ENCODE measurements at regions of chr15 and their contacts with region 1.

Region 1: GRCh38 chr15:64893481-64894394 is 18.0 kb upstream of the ANKDD1A start:
- DNase-seq: peak; percentile 96
- H3K4me3 ChIP-seq: peak overlapping the region; percentile 57
- H3K27ac ChIP-seq: peak overlapping the region; percentile 94
- H3K4me1 ChIP-seq: peaks cover 62% of the 10 kb centered on the region
- H3K27me3 ChIP-seq: no peaks in the 10 kb centered on the region
- CTCF ChIP-seq: no peak

Region 2: DNA sequence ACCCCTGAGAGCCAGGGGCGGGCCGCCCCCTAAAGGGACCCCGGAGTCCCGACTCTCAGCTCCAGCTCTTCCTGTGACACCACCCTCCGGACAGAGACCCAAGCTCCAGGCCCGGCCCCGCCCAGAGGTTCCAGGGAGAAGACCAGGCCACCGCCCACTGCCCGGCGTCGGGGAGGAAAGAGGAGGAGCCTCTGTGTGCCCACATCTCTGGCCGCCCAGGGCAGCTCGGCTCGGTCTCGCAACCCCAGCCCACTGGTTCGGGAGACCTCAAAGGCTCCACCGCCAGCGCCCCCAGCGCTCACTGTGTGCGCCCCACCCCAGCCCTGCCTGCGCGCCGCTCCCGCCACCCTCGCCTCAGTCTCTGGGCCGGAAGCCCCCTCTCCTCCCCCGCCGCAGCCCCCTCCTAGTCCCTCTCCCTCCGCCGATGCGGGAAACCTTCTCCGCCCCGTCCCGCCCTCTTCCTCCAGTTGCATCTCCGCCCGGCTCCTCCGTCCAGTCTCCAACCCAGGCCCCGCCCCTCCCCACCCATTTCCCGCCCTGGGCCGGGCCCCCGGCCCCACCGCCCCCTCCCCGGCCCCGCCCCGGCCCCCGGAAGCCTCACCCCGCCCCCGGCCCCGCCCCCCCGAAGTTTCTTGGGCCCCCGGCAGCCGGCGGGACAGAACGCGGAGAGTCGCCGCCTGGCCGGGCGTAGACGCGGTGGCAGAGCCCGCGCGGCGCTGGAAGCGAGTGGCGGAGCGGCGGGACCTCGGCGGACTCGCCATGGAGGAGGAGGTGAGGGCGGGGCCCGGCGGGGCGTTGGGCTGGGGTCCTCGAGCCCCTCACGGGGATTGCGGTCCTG is 52.3 kb before region 1 on chr15 and contains the start of gene PLEKHO2:
- intact Hi-C with region 1: loop called (anchors 10 kb)
- DNase-seq: peak; percentile 97
- H3K4me3 ChIP-seq: peak within 1 kb of the TSS; percentile 99
- H3K27ac ChIP-seq: peak within 1 kb of the TSS; percentile 99
- H3K4me1 ChIP-seq: peaks cover 57% of the 10 kb centered on the region
- H3K27me3 ChIP-seq: no peaks in the 10 kb centered on the region
- CTCF ChIP-seq: peak; percentile 30
- total RNA-seq, gene PLEKHO2: 8.0 TPM

Measured in left ventricle myocardium inferior (tissue), 1 donor.